Endothelial cell of umbilical vein (primary cell): ENCODE measurements at regions of chrX and their contacts with region 1.

Region 1: DNA sequence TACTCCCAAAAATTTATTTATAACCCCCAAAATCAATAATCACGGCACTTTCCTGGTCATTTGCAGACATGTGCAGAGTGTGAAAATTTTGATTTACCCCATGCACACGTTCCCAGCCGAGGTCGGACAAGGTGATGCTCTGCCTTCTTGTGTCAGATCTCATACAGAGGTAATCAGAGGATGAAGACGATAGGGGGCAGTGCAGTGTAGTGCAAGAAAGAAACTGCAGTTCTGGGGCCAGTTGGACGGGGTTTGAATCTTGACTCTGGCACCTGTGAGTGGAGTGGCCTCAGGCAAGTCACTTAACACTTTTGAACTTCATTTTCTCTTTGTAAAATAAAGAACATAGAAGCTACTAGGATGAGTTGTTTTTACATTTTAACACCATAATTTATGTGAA is 88.4 kb downstream of the FRMPD3 start:
- DNase-seq: peak; percentile 29
- H3K4me3 ChIP-seq: no peak overlapping the region
- H3K27ac ChIP-seq: no peak overlapping the region
- H3K4me1 ChIP-seq: no peaks in the 10 kb centered on the region
- H3K27me3 ChIP-seq: no peaks in the 10 kb centered on the region
- CTCF ChIP-seq: peak; percentile 22 to 42
- POLR2A ChIP-seq: no peak

Region 2: GRCh38 chrX:107454302-107454701 is 83.5 kb before region 1 on chrX:
- CTCF ChIA-PET with region 1: no interaction called
- POLR2A ChIA-PET with region 1: no interaction called
- dilution Hi-C with region 1: no loop called
- intact Hi-C with region 1: no loop called
- DNase-seq: no peak
- H3K4me3 ChIP-seq: no peak overlapping the region
- H3K27ac ChIP-seq: no peak overlapping the region
- H3K4me1 ChIP-seq: no peaks in the 10 kb centered on the region
- H3K27me3 ChIP-seq: peaks cover 21 to 22% of the 10 kb centered on the region in 2 experiments
- CTCF ChIP-seq: no peak
- POLR2A ChIP-seq: no peak

Region 3: DNA sequence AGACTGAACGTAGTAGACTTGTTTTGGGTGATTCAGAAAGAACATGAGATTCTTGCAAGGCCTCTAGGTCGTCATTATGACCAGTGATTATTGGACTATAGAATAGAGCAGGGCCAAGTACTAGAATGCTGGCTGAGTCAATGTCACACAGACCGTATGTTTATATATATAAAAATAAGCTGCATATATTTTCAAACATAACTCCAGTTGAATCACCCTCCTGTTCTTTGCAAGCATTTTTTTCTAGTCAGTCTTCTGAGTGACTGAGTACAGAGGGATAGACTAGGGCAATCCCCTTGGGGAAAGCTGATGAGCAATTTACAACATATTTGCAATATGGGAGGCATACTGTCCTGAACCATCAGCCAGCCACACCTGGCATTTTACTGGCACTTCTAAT is 42.1 kb after region 1 on chrX:
- CTCF ChIA-PET with region 1: no interaction called
- POLR2A ChIA-PET with region 1: no interaction called
- dilution Hi-C with region 1: no loop called
- intact Hi-C with region 1: no loop called
- DNase-seq: no peak
- H3K4me3 ChIP-seq: no peak overlapping the region
- H3K27ac ChIP-seq: no peak overlapping the region
- H3K4me1 ChIP-seq: no peaks in the 10 kb centered on the region
- H3K27me3 ChIP-seq: no peaks in the 10 kb centered on the region
- CTCF ChIP-seq: no peak
- POLR2A ChIP-seq: no peak

Region 4: GRCh38 chrX:107627838-107628661 is 90.2 kb after region 1 on chrX and contains the start of gene PRPS1:
- CTCF ChIA-PET with region 1: interaction called, 4 read pairs
- POLR2A ChIA-PET with region 1: no interaction called
- dilution Hi-C with region 1: no loop called
- intact Hi-C with region 1: loop called (anchors 1 kb)
- DNase-seq: peak; percentile 93
- H3K4me3 ChIP-seq: peak within 1 kb of the TSS; percentile 29 to 75 (median 65)
- H3K27ac ChIP-seq: peak within 1 kb of the TSS; percentile 85
- H3K4me1 ChIP-seq: peaks cover 7% of the 10 kb centered on the region
- H3K27me3 ChIP-seq: no peaks in the 10 kb centered on the region
- CTCF ChIP-seq: no peak
- POLR2A ChIP-seq: peak; percentile 44
- total RNA-seq, gene PRPS1: 36.8 and 38.7 TPM in 2 replicates

Region 5: DNA sequence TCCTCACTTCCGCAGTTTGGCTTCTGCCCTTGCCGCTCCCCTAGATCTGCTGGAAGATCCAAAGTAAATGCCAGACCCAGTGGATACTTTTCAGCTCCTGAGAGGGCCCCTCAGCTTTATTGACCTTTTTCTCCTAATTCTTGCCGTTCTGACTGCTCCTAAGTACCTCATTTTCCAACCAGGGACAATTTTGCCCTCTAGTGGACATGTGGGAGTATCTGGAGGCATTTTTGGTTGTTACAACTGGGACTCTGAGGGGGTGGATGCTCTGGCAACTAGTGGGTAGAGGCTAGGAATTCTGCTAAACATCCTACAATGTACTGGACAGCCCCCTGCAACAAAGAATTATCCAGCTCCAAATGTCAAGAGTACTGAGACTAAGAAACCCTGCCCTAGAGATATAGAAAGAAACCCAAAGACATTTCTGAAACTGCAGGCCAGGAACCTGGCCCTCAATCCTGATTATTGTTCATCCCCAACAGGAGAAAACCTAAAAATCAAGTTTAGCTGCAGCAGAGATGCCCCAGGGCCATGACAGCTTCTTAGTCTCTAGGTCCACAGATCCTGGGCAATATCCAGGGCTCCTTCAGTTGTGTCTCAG is 441.0 kb after region 1 on chrX:
- CTCF ChIA-PET with region 1: interaction called, 3 read pairs
- POLR2A ChIA-PET with region 1: no interaction called
- dilution Hi-C with region 1: no loop called
- intact Hi-C with region 1: loop called (anchors 5 kb)
- DNase-seq: peak; percentile 23
- H3K4me3 ChIP-seq: no peak overlapping the region
- H3K27ac ChIP-seq: no peak overlapping the region
- H3K4me1 ChIP-seq: no peaks in the 10 kb centered on the region
- H3K27me3 ChIP-seq: no peaks in the 10 kb centered on the region
- CTCF ChIP-seq: peak; percentile 26 to 40
- POLR2A ChIP-seq: no peak

Region 6: DNA sequence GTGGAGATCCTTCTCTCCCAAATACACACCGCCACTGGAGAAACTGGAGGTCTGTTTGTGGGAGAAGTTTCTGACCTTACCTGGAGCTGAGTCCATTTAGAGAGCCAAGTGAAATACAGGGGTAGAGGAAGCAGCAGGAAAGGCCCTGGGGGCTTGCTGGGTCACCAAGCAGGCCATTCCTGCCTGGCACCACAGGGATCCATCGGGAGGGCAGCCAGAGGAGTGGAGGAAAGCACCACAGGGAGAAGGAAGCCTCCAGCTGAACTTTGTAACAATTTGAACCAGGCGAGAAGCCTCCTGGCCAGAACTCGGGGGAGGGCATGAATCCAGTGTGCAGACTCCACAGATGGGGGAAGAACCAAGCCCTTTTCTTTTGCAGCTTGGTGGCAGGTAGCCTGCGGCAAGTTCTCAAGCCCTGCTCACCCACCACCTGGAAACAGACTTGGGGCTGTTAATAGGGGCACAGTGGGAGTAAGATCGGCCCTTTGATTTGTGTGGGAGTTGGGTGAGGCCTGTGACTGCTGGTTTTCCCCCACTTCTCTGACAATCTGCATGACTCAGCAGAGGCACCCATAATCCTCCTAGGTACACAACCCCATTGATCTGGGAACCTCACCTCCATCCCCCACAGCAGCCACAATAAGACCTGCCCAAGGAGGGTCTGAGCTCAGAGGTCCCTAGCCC is 1103.9 kb after region 1 on chrX:
- CTCF ChIA-PET with region 1: no interaction called
- POLR2A ChIA-PET with region 1: no interaction called
- dilution Hi-C with region 1: no loop called
- intact Hi-C with region 1: no loop called
- DNase-seq: no peak
- H3K4me3 ChIP-seq: no peak overlapping the region
- H3K27ac ChIP-seq: no peak overlapping the region
- H3K4me1 ChIP-seq: no peaks in the 10 kb centered on the region
- H3K27me3 ChIP-seq: no peaks in the 10 kb centered on the region
- CTCF ChIP-seq: no peak
- POLR2A ChIP-seq: no peak